ENCODE measurements at regions of chr3 and their contacts with region 1.

Region 1: DNA sequence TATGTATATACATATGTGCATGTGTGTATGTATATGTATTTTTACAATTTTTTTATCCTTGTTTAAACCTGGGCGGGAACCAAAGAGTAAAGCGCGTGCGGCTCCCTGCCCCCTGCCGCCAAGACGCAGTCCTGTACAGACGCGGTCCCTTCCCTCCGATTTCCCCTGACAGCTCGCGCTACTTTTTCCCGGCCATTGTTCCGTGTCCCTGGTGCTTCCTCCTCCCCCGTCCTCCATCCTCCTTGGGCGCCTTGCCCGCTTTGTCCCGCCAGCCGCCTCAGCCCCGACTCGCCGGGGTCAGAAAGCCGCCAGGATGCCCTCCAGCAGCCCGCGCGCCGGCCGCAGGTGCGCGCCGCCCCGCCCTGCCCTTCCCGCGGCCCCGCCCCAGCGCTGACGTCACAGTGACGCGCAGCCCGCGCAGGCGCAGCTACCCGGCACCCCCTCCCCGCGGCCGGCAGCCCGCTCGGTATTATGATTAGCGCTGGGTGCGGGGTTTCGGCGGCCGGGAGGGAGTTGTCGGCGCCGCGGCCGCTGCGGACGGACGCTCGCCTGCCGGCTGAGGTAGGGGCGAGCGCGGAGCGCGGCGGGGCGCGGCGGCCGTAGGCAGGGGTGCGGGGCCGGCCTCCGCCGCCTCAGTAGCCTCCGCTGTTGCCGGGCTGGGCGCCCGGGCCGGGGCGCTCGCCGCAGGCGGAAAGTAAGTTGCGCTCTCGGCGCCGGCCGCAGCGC is at the start of gene SNRK:
- DNase-seq: peak; percentile 93
- H3K4me3 ChIP-seq: peak within 1 kb of the TSS; percentile 54 to 71 (median 66)
- H3K27ac ChIP-seq: peak within 1 kb of the TSS; percentile 87 to 96 (median 91)
- H3K4me1 ChIP-seq: peaks cover 0 to 45% (median 39%) of the 10 kb centered on the region in 4 donors
- H3K27me3 ChIP-seq: no peaks in the 10 kb centered on the region
- CTCF ChIP-seq: peak in 2 of 4 experiments; percentile 29 to 35
- EP300 ChIP-seq: peak in 1 of 4 donors; percentile 29
- POLR2A ChIP-seq: peak in 1 of 2 donors; percentile 23
- total RNA-seq, gene SNRK: 35.1 to 47.9 (median 42.1) TPM

Region 2: DNA sequence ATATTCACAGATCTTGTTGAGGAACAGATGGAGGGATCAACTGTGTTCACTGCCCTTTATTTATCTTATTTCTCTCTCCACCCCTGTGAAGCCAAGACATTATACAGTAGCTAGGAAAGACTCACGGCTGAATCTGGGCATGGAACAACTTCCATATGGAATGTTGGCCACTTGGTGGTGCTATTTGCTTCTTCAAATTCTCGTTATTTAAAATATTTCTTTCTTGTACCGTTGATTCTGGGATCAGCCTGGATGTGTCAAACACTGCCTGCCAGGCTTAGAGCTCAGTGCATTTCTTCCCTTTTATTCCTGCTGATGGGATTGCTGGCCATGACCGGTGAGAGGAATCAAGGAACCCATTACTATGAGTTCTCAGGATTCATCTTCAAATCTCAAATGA is 324.6 kb before region 1 on chr3:
- intact Hi-C with region 1: loop called (anchors 5 kb)
- DNase-seq: no peak
- H3K4me3 ChIP-seq: no peak overlapping the region
- H3K27ac ChIP-seq: no peak overlapping the region
- H3K4me1 ChIP-seq: peaks cover 0 to 9% (median 5%) of the 10 kb centered on the region in 4 donors
- H3K27me3 ChIP-seq: no peaks in the 10 kb centered on the region
- CTCF ChIP-seq: peak; percentile 45 to 68 (median 60)
- EP300 ChIP-seq: no peak
- POLR2A ChIP-seq: no peak

Region 3: GRCh38 chr3:43326891-43327581 is 40.8 kb after region 1 on chr3:
- intact Hi-C with region 1: loop called (anchors 5 kb)
- DNase-seq: no peak
- H3K4me3 ChIP-seq: no peak overlapping the region
- H3K27ac ChIP-seq: peak overlapping the region; percentile 35 to 69 (median 53)
- H3K4me1 ChIP-seq: peaks cover 0 to 54% (median 42%) of the 10 kb centered on the region in 4 donors
- H3K27me3 ChIP-seq: no peaks in the 10 kb centered on the region
- CTCF ChIP-seq: no peak
- EP300 ChIP-seq: peak in 1 of 4 donors; percentile 26
- POLR2A ChIP-seq: no peak

Region 4: DNA sequence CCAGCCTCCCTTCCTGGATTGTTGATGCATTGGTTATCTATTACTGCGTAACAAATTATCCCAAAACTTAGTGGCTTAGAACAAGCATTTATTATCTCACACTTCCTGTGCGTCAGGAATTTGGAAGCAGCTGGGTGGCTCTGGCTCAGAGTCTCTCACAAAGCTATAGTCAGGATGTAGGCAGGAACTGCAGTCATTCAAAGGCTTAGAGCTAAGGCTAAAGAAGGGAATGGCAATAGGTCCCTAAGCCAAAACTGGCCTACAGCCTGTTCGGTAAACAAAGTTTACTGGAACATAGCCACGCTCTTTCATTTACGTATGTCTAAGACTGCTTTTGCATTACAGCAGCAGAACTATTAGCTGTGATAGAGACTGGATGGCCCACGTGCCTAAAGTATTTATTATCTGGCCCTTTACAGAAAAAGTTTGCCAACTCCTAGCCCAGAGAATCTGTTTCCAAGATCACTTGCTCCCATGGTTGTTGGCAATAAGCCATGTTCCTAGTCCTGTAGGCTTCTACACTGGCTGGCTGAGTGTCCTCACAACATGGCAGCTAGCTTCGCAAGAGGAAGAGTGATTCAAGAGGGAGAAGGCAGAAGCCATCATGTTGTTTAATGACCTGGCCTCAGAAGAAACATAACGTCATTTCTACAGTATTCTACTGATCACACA is 132.5 kb after region 1 on chr3:
- intact Hi-C with region 1: loop called (anchors 5 kb)
- DNase-seq: no peak
- H3K4me3 ChIP-seq: no peak overlapping the region
- H3K27ac ChIP-seq: peak overlapping the region in 3 of 4 donors; percentile 39 to 52 (median 47)
- H3K4me1 ChIP-seq: peaks cover 0 to 31% (median 22%) of the 10 kb centered on the region in 4 donors
- H3K27me3 ChIP-seq: no peaks in the 10 kb centered on the region
- CTCF ChIP-seq: no peak
- EP300 ChIP-seq: peak in 2 of 4 donors; percentile 24 to 67
- POLR2A ChIP-seq: no peak

Region 5: GRCh38 chr3:43489930-43490329 is 203.7 kb after region 1 on chr3:
- intact Hi-C with region 1: no loop called
- DNase-seq: no peak
- H3K4me3 ChIP-seq: no peak overlapping the region
- H3K27ac ChIP-seq: no peak overlapping the region
- H3K4me1 ChIP-seq: no peaks in the 10 kb centered on the region
- H3K27me3 ChIP-seq: no peaks in the 10 kb centered on the region
- CTCF ChIP-seq: no peak
- EP300 ChIP-seq: no peak
- POLR2A ChIP-seq: no peak

Region 6: GRCh38 chr3:43621656-43622432 is 335.6 kb after region 1 on chr3 and contains the start of gene ANO10:
- intact Hi-C with region 1: loop called (anchors 5 kb)
- DNase-seq: peak; percentile 99
- H3K4me3 ChIP-seq: peak within 1 kb of the TSS; percentile 64 to 90 (median 83)
- H3K27ac ChIP-seq: peak within 1 kb of the TSS; percentile 82 to 92 (median 90)
- H3K4me1 ChIP-seq: peaks cover 0 to 16% (median 12%) of the 10 kb centered on the region in 4 donors
- H3K27me3 ChIP-seq: no peaks in the 10 kb centered on the region
- CTCF ChIP-seq: no peak
- EP300 ChIP-seq: no peak
- POLR2A ChIP-seq: peak; percentile 40
- total RNA-seq, gene ANO10: 14.5 to 30.5 (median 17.5) TPM

Measured in sigmoid colon (tissue), 7 donors.